GM12878 (cell line): ENCODE measurements at regions of chr2 and their contacts with region 1.

Region 1: GRCh38 chr2:54052825-54053718 is 62.3 kb upstream of the ACYP2 start:
- DNase-seq: no peak
- ATAC-seq: peak; percentile 65
- H3K4me3 ChIP-seq: 0 out of 2 replicates have a peak overlapping the region, but pooled peaks have one; percentile 43
- H3K27ac ChIP-seq: peak overlapping the region; percentile 50
- H3K4me1 ChIP-seq: peaks cover 22% of the 10 kb centered on the region
- H3K27me3 ChIP-seq: no peaks in the 10 kb centered on the region
- CTCF ChIP-seq: peak; percentile 35 to 48 (median 37); a peak in 4 of 6 replicates
- EP300 ChIP-seq: no peak
- POLR2A ChIP-seq: no peak
- RAD21 ChIP-seq: peak; percentile 69

Region 2: DNA sequence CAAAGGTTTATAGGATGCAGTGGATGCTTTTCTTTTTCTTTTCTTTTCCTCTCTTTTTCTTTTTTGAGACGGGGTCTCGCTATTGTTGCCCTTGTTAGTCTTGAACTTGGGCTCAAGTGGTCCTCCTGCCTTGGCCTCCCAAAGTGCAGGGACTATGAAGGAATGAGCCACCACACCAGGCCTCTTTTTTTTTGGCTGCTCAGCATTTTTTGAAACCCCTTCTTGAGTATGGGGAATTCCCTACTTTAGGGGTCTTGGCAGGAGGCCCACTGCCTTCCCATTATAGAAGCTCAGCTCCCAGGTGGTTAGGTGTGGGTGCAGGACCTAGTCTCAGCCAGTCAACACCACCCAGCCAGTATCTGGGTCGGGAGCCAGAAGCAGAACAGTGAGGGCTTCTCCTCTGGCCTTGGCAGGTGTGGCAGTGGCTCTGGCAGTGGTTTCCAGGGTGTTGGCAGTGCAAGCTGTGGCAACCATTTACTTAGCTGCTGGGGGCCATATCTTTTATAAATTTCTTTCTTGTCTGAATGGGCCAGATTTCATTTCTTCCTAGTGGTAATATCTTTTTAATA is 11.0 kb after region 1 on chr2:
- CTCF ChIA-PET with region 1: interaction called, 12 read pairs
- POLR2A ChIA-PET with region 1: no interaction called
- RAD21 ChIA-PET with region 1: no interaction called
- SMC1A ChIA-PET with region 1: interaction called, 3 read pairs
- in situ Hi-C with region 1: no loop called
- intact Hi-C with region 1: no loop called
- DNase-seq: no peak
- ATAC-seq: no peak
- H3K4me3 ChIP-seq: no peak overlapping the region
- H3K27ac ChIP-seq: no peak overlapping the region
- H3K4me1 ChIP-seq: no peaks in the 10 kb centered on the region
- H3K27me3 ChIP-seq: no peaks in the 10 kb centered on the region
- CTCF ChIP-seq: no peak
- EP300 ChIP-seq: no peak
- POLR2A ChIP-seq: no peak
- RAD21 ChIP-seq: no peak

Region 3: DNA sequence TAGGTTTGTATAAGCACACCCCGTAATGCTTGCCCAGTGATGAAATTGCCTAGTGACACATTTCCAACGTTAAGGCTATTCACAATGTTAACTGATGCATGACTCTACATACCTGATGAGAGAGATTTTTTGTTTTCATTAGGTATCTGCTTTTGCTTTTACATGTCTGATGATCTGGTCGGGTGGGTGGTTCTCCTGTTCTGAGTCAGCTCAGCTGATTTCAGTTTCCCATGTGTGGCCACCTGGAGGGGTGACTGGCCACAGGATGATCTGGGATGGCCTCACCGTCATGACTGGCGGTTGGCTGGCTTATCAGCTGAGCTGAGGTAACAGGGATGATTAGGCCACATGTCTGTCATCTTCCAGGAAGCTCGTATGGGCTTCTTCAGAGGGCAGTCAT is 28.5 kb after region 1 on chr2:
- CTCF ChIA-PET with region 1: interaction called, 10 read pairs
- POLR2A ChIA-PET with region 1: no interaction called
- RAD21 ChIA-PET with region 1: interaction called, 3 read pairs
- SMC1A ChIA-PET with region 1: interaction called, 5 read pairs
- in situ Hi-C with region 1: no loop called
- intact Hi-C with region 1: loop called (anchors 1 kb)
- DNase-seq: peak; percentile 87
- ATAC-seq: peak; percentile 95
- H3K4me3 ChIP-seq: no peak overlapping the region
- H3K27ac ChIP-seq: 0 out of 2 replicates have a peak overlapping the region, but pooled peaks have one; percentile 28
- H3K4me1 ChIP-seq: peaks cover 8% of the 10 kb centered on the region
- H3K27me3 ChIP-seq: peaks cover 0 to 3% of the 10 kb centered on the region in 2 experiments; a peak in 1 of 4 replicates
- CTCF ChIP-seq: no peak
- EP300 ChIP-seq: peak; percentile 98 to 99
- POLR2A ChIP-seq: no peak
- RAD21 ChIP-seq: peak; percentile 26; the same call in 1 of the 2 replicates

Region 4: DNA sequence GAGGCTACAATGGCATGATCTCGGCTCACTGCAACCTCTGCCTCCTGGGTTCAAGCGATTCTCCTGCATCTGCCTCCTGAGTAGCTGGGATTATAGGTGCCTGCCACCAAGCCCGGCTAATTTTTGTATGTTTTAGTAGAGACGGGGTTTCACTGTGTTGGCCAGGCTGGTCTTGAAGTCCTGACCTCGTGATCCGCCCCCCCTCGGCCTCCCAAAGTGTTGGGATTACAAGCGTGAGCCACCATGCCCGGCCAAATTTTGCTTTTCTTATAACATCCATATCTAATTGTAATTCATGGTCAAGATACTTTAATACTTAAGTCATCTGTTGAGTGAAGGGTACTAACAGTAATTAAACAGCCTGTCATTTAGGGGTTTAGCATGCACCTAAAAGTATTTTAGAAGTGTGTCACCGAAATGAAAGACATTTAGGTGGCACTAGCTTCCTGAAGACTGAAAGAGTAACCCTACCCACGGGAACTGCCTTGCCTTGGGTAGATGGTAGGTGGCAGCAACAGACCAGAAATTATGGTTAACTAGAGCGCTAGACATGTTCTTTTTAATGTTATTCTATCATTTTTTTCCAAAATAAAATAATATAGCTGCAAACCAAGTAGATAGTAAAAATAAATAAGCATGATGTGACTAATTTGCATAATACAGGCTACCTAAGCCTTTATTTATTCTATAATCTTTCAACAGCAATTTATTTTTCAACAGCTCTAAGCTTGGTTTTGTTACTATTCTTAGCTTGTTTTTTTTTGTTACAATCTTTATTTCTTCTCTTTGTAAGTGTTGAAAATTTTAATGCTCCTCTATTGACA is 53.8 kb after region 1 on chr2:
- CTCF ChIA-PET with region 1: interaction called, 14 read pairs
- POLR2A ChIA-PET with region 1: no interaction called
- RAD21 ChIA-PET with region 1: interaction called, 11 read pairs
- SMC1A ChIA-PET with region 1: interaction called, 17 read pairs
- in situ Hi-C with region 1: no loop called
- intact Hi-C with region 1: no loop called
- DNase-seq: no peak
- ATAC-seq: peak; percentile 83
- H3K4me3 ChIP-seq: no peak overlapping the region
- H3K27ac ChIP-seq: no peak overlapping the region
- H3K4me1 ChIP-seq: no peaks in the 10 kb centered on the region
- H3K27me3 ChIP-seq: no peaks in the 10 kb centered on the region
- CTCF ChIP-seq: peak; percentile 59 to 73 (median 60); a peak in 5 of 6 replicates
- EP300 ChIP-seq: no peak
- POLR2A ChIP-seq: no peak
- RAD21 ChIP-seq: peak; percentile 73

Region 5: GRCh38 chr2:54224997-54225396 is 171.9 kb after region 1 on chr2:
- CTCF ChIA-PET with region 1: no interaction called
- POLR2A ChIA-PET with region 1: no interaction called
- RAD21 ChIA-PET with region 1: no interaction called
- SMC1A ChIA-PET with region 1: no interaction called
- in situ Hi-C with region 1: no loop called
- intact Hi-C with region 1: no loop called
- DNase-seq: no peak
- ATAC-seq: no peak
- H3K4me3 ChIP-seq: no peak overlapping the region
- H3K27ac ChIP-seq: no peak overlapping the region
- H3K4me1 ChIP-seq: no peaks in the 10 kb centered on the region
- H3K27me3 ChIP-seq: no peaks in the 10 kb centered on the region
- CTCF ChIP-seq: no peak
- EP300 ChIP-seq: no peak
- POLR2A ChIP-seq: no peak
- RAD21 ChIP-seq: no peak